SK-N-SH (cell line): ENCODE measurements at regions of chr9 and their contacts with region 1.

Region 1: GRCh38 chr9:34899535-34900158 is 58.4 kb upstream of the PHF24 start:
- DNase-seq: peak; percentile 78
- H3K4me3 ChIP-seq: no peak overlapping the region; a peak in 1 of 4 replicates
- H3K27ac ChIP-seq: no peak overlapping the region
- H3K4me1 ChIP-seq: no peaks in the 10 kb centered on the region
- H3K27me3 ChIP-seq: peaks cover 47% of the 10 kb centered on the region
- CTCF ChIP-seq: peak; percentile 87
- EP300 ChIP-seq: no peak
- RAD21 ChIP-seq: peak; percentile 96

Region 2: DNA sequence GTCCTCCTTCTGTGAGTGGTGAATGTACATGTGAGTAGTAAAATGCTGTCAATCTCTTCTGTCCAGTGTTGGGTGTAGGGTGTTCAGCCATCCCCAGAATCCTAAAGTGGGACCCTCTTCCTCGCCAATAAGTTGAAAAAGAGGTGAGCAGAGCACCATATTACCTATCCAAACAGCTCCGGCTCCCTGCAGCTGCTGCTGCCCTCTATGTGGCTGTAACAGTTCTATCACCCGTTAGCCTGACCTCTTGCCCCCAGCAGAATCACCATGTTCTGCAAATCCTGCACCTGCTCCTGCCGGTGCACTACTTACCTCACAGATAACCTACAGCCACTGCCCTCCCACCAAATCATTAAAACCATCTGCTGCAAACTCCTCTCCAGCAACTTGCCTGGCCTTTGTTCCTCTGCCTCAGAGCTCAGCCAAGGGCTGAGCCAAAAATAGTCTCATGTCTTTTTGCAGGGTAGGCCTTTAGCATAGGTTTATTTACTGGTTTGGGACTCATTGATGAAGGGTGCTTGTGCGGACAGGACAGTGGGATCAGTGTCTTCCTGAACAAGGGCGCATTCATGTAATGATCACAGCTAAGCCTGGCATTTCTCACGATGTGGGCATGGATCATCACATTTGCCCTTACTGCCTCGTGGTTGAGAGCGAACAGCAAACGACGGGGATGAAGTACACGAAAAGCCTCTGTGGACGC is 140.1 kb before region 1 on chr9:
- CTCF ChIA-PET with region 1: interaction called, 25 read pairs
- POLR2A ChIA-PET with region 1: no interaction called
- DNase-seq: no peak
- H3K4me3 ChIP-seq: no peak overlapping the region
- H3K27ac ChIP-seq: no peak overlapping the region
- H3K4me1 ChIP-seq: no peaks in the 10 kb centered on the region
- H3K27me3 ChIP-seq: peaks cover 10% of the 10 kb centered on the region; the same call in 1 of the 2 replicates
- CTCF ChIP-seq: no peak
- EP300 ChIP-seq: no peak
- RAD21 ChIP-seq: no peak

Region 3: GRCh38 chr9:34929506-34930102 is 30.0 kb after region 1 on chr9:
- CTCF ChIA-PET with region 1: interaction called, 14 read pairs
- POLR2A ChIA-PET with region 1: no interaction called
- DNase-seq: peak; percentile 59
- H3K4me3 ChIP-seq: no peak overlapping the region
- H3K27ac ChIP-seq: no peak overlapping the region
- H3K4me1 ChIP-seq: peaks cover 0 to 6% of the 10 kb centered on the region in 2 experiments; a peak in 1 of 4 replicates
- H3K27me3 ChIP-seq: peaks cover 9% of the 10 kb centered on the region
- CTCF ChIP-seq: peak; percentile 63
- EP300 ChIP-seq: no peak
- RAD21 ChIP-seq: peak; percentile 29; the same call in 1 of the 2 replicates

Region 4: DNA sequence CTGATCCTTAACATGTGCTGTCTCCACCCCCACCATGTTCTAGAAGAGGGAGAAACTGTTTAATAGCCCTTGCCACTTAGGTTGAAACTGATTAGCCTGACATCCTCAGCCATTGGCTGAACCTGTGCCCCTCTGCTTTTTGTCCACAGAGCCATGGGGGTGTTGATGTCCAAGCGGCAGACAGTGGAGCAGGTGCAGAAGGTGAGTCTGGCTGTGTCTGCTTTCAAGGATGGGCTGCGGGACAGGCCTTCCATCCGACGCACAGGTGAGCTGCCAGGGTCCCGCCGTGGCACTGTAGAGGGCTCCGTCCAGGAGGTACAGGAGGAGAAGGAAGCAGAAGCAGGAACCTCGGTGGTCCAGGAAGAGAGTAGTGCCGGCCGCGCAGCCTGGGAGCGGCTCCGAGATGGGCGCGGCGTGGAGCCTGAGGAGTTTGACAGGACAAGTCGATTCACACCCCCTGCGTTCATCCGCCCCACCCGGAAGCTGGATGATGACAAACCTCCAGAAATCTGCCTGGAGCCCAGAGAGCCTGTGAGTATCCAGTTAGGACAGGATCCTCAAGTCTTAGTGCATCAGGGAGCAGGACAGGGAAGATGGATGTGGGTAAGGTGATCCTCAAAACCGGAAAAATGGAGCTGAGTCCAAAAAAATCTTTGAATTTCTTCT is 71.6 kb after region 1 on chr9:
- CTCF ChIA-PET with region 1: interaction called, 19 read pairs
- POLR2A ChIA-PET with region 1: no interaction called
- DNase-seq: no peak
- H3K4me3 ChIP-seq: no peak overlapping the region
- H3K27ac ChIP-seq: no peak overlapping the region
- H3K4me1 ChIP-seq: no peaks in the 10 kb centered on the region
- H3K27me3 ChIP-seq: peaks cover 36% of the 10 kb centered on the region
- CTCF ChIP-seq: no peak
- EP300 ChIP-seq: no peak
- RAD21 ChIP-seq: no peak

Region 5: GRCh38 chr9:34989003-34989945 is 89.6 kb after region 1 on chr9 and contains the start of gene DNAJB5:
- CTCF ChIA-PET with region 1: interaction called, 174 read pairs
- POLR2A ChIA-PET with region 1: interaction called, 19 read pairs
- DNase-seq: peak; percentile 96
- H3K4me3 ChIP-seq: peak within 1 kb of the TSS; percentile 70 to 94
- H3K27ac ChIP-seq: peak within 1 kb of the TSS; percentile 55 to 95
- H3K4me1 ChIP-seq: peaks cover 28 to 76% of the 10 kb centered on the region in 2 experiments
- H3K27me3 ChIP-seq: no peaks in the 10 kb centered on the region
- CTCF ChIP-seq: no peak
- EP300 ChIP-seq: peak in 1 of 2 experiments; percentile 21; a peak in 1 of 4 replicates
- RAD21 ChIP-seq: no peak
- polyA plus RNA-seq, gene DNAJB5: 3.3 and 4.0 TPM in 2 replicates

Region 6: DNA sequence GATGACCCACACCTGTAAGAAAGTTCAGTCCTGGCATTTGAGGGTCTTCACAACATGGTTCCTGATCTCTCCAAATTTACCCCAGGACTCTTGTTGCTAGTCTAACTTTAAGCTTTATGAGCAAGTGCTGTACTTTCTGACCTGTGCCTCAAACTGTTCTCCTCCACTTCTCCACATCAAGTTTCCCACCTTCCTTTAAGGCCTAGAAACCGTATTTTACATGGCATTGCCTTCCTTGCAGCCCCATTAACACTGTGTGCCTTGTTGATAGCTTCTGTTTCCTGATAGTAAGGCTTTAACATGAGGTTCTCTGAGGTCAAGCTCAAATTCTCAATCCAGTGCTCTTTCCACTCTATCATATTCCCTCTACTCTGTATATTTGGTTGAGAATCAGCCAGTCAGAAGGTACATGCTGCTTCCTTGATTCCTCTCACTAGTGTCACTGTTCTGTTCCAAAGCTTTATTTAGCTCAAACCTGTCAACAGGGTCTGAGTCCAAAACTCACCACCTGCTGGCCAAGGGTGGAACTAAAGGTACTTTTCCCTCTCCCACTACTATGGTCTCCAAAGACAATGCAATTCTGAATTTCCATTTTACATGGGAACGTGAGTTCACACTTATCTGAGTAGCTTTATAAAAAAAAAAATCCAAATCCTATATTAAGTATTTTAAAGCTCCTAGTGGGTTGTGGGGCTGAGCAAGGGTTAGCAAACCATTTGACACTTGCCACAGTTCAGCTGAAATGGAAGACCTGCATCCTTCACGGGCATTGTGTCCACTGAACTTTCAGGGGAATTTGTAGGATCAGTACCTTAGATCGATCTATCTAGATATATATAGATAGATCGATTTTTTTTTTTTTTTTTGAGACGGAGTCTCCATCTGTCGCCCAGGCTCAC is 151.7 kb after region 1 on chr9:
- CTCF ChIA-PET with region 1: interaction called, 78 read pairs
- POLR2A ChIA-PET with region 1: interaction called, 3 read pairs
- DNase-seq: peak; percentile 67
- H3K4me3 ChIP-seq: no peak overlapping the region
- H3K27ac ChIP-seq: no peak overlapping the region
- H3K4me1 ChIP-seq: no peaks in the 10 kb centered on the region
- H3K27me3 ChIP-seq: no peaks in the 10 kb centered on the region
- CTCF ChIP-seq: peak; percentile 70
- EP300 ChIP-seq: no peak
- RAD21 ChIP-seq: peak; percentile 57

Region 7: GRCh38 chr9:35079426-35080341 is 180.0 kb after region 1 on chr9 and contains the start of gene FANCG:
- CTCF ChIA-PET with region 1: interaction called, 17 read pairs
- POLR2A ChIA-PET with region 1: no interaction called
- DNase-seq: peak; percentile 94
- H3K4me3 ChIP-seq: peak within 1 kb of the TSS; percentile 68 to 74
- H3K27ac ChIP-seq: peak within 1 kb of the TSS; percentile 64 to 88
- H3K4me1 ChIP-seq: peaks cover 11 to 13% of the 10 kb centered on the region in 2 experiments; a peak in 1 of 4 replicates
- H3K27me3 ChIP-seq: no peaks in the 10 kb centered on the region
- CTCF ChIP-seq: no peak
- EP300 ChIP-seq: no peak
- RAD21 ChIP-seq: no peak
- polyA plus RNA-seq, gene FANCG: 25.1 and 25.6 TPM in 2 replicates

Region 8: DNA sequence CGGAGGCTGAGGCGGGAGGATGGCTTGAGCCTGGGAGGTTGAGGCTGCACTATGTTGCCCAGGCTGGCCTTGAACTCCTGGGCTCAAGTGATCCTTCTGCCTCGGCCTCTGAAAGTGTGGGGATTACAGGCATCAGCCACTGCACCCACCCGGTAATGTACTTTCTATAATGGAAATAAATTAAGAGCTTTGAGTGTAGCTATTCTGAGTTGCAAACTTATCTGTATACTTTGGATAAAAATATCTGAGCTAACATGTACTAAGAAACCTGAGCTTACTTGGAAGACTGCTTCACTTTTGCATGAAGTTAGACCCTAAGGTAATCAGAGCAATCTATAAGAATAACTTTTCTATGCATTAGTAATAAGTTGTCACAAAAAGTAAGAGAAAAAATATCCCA is 312.2 kb after region 1 on chr9:
- CTCF ChIA-PET with region 1: no interaction called
- POLR2A ChIA-PET with region 1: no interaction called
- DNase-seq: no peak
- H3K4me3 ChIP-seq: no peak overlapping the region
- H3K27ac ChIP-seq: no peak overlapping the region
- H3K4me1 ChIP-seq: no peaks in the 10 kb centered on the region
- H3K27me3 ChIP-seq: no peaks in the 10 kb centered on the region
- CTCF ChIP-seq: no peak
- EP300 ChIP-seq: no peak
- RAD21 ChIP-seq: no peak